ENCODE measurements at regions of chr7 and their contacts with region 1.

Region 1: DNA sequence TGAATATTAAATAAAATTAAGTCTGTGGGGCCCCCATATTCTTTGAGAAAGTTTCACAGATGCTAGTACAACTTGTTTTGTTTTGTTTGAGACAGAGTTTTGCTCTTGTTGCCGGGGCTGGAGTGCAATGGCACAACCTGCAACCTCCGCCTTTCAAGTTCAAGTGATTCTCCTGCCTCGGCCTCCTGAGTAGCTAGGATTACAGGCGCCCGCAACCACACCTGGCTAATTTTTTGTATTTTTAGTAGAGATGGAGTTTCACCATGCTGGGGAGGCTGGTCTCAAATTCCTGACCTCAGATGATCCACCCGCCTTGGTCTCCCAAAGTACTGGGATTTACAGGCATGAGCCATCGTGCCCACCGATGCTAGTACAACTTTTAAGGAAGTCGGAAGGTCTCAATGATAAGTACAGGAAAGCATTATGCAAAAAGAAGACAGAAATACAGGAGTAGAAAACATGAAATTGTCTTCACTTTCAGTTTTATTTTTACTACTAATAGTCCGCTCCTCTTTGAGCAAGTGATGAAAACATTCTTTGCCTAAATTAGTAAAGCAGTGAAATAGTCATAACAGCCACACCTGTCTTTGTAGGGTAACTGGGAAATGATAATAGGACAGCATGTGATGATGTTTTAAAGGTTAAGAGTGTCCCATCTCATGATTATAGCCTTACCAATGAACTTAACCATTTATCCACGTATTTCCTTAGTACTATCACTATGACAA is 147.5 kb downstream of the SEMA3D start:
- DNase-seq: no peak
- ATAC-seq: no peak

Region 2: GRCh38 chr7:85094046-85094725 is 54.8 kb after region 1 on chr7:
- intact Hi-C with region 1: no loop called
- DNase-seq: no peak
- ATAC-seq: peak; percentile 95

Region 3: DNA sequence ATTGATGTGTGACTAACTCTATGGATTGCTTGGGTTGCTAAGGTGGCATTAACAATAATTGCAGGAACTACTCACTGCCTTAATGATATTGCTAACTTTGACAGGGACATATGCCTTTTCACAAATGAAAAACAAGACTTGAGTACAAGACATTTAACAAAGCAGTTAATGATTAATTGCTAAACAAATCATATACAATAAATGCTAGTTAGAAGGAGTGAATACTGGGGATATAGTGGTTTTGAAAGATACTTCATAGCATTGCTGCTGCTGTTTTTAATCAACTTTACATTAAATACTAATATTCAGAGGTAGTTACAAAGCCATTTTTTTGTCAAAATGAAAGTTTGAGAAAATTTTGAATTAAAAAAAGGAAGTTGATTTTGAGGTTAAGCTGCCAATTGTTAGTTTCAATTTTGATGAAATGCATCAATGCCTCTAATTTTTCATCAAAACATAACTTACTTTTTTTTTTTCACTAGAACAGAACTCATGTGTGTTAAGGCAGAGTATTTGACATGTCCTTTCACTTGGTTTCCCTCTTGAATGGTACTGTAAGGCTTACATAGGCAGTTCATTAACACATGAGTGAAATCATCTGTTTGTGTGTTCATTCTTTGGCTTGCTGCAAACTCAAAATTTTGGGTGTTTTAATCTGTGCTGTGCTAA is 253.7 kb after region 1 on chr7:
- intact Hi-C with region 1: loop called (anchors 5 kb)
- DNase-seq: no peak
- ATAC-seq: no peak

Measured in sciatic nerve (tissue), 2 donors.